Prostate gland (tissue), 2 donors: ENCODE measurements at regions of chr1 and their contacts with region 1.

Region 1: GRCh38 chr1:13667691-13668090 is 32.3 kb upstream of the PRDM2 start:
- DNase-seq: no peak
- H3K4me3 ChIP-seq: no peak overlapping the region
- H3K27ac ChIP-seq: no peak overlapping the region
- H3K4me1 ChIP-seq: no peaks in the 10 kb centered on the region
- H3K27me3 ChIP-seq: no peaks in the 10 kb centered on the region
- CTCF ChIP-seq: no peak
- POLR2A ChIP-seq: no peak

Region 2: DNA sequence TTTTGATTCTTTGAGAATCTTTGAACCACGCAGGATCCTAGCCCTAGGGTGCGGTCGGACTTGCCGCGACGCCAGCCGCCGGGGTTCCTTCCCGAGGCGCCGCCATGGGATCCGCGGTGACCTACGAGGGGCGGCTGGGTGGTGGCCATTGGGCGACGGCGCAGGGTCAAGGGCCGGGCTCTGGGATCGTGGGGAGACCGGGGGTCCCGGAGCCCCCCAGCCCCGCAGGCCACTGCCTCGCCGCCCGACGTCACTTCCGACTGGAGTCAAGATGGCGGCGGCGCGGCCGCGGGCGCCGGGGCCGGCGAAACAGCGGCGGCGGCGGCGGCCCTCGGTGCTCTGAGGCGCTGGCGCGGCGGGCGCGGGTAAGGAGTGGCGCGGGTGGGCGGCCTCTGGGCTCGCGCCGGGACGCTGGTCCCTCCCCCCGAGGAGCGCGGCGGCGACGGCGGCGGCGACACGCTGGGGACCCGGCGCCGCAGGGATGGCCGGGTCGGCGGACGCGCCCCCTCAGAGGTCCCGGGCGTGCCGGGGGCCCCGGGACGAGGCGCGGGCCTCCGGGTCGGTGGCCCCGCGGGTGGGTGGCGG is 32.3 kb after region 1 on chr1 and contains the start of gene PRDM2:
- intact Hi-C with region 1: no loop called
- DNase-seq: peak; percentile 14
- H3K4me3 ChIP-seq: peak within 1 kb of the TSS; percentile 72 to 90
- H3K27ac ChIP-seq: peak within 1 kb of the TSS; percentile 94 to 96
- H3K4me1 ChIP-seq: peaks cover 2% of the 10 kb centered on the region
- H3K27me3 ChIP-seq: no peaks in the 10 kb centered on the region
- CTCF ChIP-seq: no peak
- POLR2A ChIP-seq: peak; percentile 16
- total RNA-seq, gene PRDM2: 27.8 to 38.9 TPM

Region 3: GRCh38 chr1:13725714-13726175 is 58.1 kb after region 1 on chr1:
- intact Hi-C with region 1: loop called (anchors 5 kb)
- DNase-seq: peak; percentile 24
- H3K4me3 ChIP-seq: no peak overlapping the region
- H3K27ac ChIP-seq: no peak overlapping the region
- H3K4me1 ChIP-seq: no peaks in the 10 kb centered on the region
- H3K27me3 ChIP-seq: no peaks in the 10 kb centered on the region
- CTCF ChIP-seq: peak in 3 of 4 experiments; percentile 35 to 63 (median 54)
- POLR2A ChIP-seq: no peak

Region 4: GRCh38 chr1:13813398-13814012 is 145.8 kb after region 1 on chr1:
- intact Hi-C with region 1: loop called (anchors 5 kb)
- DNase-seq: no peak
- H3K4me3 ChIP-seq: no peak overlapping the region
- H3K27ac ChIP-seq: no peak overlapping the region
- H3K4me1 ChIP-seq: no peaks in the 10 kb centered on the region
- H3K27me3 ChIP-seq: no peaks in the 10 kb centered on the region
- CTCF ChIP-seq: peak in 3 of 4 experiments; percentile 42 to 43 (median 43)
- POLR2A ChIP-seq: no peak

Region 5: GRCh38 chr1:14160781-14161180 is 493.1 kb after region 1 on chr1:
- intact Hi-C with region 1: no loop called
- DNase-seq: no peak
- H3K4me3 ChIP-seq: no peak overlapping the region
- H3K27ac ChIP-seq: no peak overlapping the region
- H3K4me1 ChIP-seq: no peaks in the 10 kb centered on the region
- H3K27me3 ChIP-seq: no peaks in the 10 kb centered on the region
- CTCF ChIP-seq: no peak
- POLR2A ChIP-seq: no peak